Body of pancreas (tissue), 4 donors: ENCODE measurements at regions of chr6 and their contacts with region 1.

Region 1: DNA sequence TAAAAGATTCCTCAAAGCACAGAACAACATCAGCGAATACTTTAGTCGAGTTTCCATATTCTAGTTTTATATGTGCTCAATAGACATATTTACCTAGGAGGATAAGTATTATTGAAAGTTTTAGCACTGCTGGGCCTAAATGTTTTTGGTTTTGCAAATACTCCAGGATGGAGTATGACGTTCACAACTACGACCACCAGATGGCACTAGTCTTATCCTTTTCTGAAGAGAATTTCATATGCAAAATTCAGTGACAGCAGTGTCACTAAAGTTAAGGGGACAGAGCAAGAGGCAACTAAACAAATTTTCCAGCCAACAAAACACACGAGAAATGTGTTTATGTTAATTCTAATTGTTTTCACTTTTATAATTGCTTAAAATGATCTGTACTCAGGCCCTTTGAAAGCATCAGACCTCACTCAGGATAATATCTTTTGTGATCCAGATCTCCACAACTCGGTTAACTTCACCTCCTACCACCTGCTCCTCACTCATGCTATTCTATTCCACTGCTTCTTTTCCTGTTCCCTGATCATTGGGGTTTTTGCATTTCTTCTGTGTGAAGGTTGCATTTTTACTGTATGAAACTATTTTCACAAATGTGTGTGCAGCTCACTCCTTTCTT is 220.8 kb downstream of the TRDN start:
- DNase-seq: peak; percentile 57 to 72 (median 61)
- ATAC-seq: peak; percentile 53
- H3K4me3 ChIP-seq: no peak overlapping the region
- H3K27ac ChIP-seq: no peak overlapping the region
- H3K4me1 ChIP-seq: no peaks in the 10 kb centered on the region
- H3K27me3 ChIP-seq: no peaks in the 10 kb centered on the region
- CTCF ChIP-seq: peak; percentile 43 to 74 (median 53)
- POLR2A ChIP-seq: no peak

Region 2: DNA sequence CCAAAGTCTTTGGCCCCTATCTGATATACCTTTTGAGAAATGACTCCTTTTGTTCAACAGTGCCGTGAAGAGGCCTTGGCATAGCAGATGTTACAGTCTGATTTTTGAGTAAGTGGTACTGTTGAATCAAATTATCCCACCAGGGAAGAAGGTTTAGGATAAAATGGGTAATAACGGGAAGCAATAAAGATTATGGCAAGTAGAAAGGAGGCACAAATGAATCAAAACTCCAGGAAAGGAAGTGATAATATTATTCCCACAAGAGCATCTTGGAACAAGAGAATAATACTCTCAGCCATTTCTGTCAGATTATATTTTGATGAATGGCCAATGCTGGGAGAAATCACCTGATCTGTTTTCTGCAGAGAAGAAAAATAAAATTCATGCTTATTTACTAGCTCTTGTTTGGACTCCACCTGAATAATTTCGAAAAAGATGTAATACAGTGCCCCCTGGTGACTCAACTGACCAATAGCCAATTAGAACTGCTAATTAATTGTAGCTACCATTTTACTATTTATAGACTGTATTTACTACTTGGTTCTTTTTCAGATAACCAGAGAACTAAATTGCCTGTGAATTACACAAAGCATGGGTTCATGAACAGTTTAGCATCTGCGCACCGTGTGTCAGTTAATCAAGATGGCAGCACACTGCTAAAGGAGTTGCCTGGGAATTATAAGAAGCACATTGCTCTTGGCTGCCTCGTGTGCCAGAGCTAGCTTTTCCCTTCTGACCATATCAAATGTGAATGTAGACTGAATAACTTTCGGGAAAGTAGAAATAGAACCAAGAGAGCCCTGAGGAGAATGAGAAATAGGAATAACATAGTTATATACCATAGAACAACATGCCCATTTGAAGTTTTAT is 299.3 kb after region 1 on chr6:
- intact Hi-C with region 1: loop called (anchors 10 kb)
- DNase-seq: peak in 3 of 4 donors; percentile 13 to 15 (median 13)
- ATAC-seq: no peak
- H3K4me3 ChIP-seq: no peak overlapping the region
- H3K27ac ChIP-seq: no peak overlapping the region
- H3K4me1 ChIP-seq: no peaks in the 10 kb centered on the region
- H3K27me3 ChIP-seq: no peaks in the 10 kb centered on the region
- CTCF ChIP-seq: peak; percentile 29 to 67 (median 46)
- POLR2A ChIP-seq: no peak